Ovary (tissue), 10 donors: ENCODE measurements at regions of chr6 and their contacts with region 1.

Region 1: GRCh38 chr6:127539272-127539671 is 20.1 kb upstream of the MTCL3 start:
- DNase-seq: no peak
- H3K4me3 ChIP-seq: no peak overlapping the region
- H3K27ac ChIP-seq: no peak overlapping the region
- H3K4me1 ChIP-seq: no peaks in the 10 kb centered on the region
- H3K27me3 ChIP-seq: no peaks in the 10 kb centered on the region
- CTCF ChIP-seq: peak in 2 of 3 donors; percentile 13 to 34
- EP300 ChIP-seq: no peak
- POLR2A ChIP-seq: no peak

Region 2: DNA sequence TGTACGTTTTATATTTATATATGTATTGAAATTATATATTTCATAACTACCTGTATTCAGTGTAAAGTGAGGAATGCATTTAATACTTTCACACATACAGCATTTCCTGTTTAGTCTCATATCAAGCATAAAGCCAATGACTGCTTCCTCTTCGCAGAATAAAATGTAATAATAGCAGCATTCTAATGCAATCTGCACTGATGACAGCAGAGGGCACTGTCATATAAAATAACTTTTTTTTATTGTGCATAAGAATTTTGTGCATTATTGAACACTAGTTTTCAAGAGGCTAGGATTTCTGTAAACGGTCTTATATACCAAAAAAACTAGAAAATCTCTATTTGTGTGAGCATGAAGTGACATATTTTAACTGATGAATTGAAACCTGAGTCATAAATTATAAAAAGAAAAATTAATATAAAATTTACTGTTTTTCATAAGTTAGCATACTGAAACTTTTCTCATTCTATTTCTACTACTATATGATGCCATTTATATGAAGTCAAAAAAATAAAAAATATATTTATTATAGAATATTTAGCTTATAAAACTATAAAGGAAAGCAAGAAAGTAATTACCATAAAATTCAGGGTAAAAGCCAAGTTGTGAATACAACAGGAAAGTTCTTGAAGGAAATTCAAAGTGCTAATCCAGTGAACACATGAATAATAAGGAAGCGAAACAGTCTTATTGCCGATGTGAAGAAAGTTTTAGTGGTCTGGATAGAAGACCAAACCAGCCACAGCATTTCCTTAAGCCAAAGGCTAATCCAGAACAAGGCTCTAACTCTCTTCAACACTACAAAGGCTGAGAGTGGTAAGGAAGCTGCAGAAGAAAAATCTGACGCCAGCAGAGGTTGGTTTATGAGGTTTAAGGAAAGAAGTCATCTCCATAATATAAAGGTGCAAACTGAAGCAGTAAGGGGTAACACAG is 236.3 kb before region 1 on chr6:
- intact Hi-C with region 1: loop called in 3 of 4 experiments (anchors 5 to 10 kb)
- DNase-seq: peak in 2 of 5 donors; percentile 25 to 50
- H3K4me3 ChIP-seq: no peak overlapping the region
- H3K27ac ChIP-seq: no peak overlapping the region
- H3K4me1 ChIP-seq: no peaks in the 10 kb centered on the region
- H3K27me3 ChIP-seq: no peaks in the 10 kb centered on the region
- CTCF ChIP-seq: peak; percentile 24 to 45 (median 28)
- EP300 ChIP-seq: no peak
- POLR2A ChIP-seq: no peak

Region 3: DNA sequence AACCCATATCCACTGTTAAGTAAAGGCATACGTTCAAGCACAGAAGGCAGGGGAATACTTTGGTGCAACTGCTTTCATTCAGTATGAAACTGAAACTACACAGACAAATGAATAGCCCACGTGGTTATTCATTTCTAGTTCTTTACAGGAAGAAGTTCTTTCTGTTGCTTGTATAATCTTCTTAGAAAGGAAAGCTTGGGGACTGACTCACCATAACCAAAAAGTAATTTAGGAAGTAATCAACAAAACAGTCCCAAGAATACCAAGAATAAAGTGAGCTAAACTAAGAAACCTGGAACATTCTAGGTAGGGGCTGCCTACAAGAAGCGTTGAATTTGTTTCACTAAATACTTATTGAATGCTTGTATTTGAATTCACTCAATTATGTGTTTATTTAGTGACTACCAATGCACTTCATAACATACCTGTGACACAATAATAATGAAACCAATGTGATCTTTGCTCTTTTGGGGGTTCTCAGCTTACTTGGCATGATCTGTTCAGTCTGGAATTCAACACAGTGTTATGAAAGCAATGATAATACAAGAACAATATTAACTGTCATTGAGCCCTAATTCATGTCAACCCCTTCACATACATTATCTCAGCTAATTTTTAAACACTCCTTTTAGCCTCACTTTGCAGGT is 54.9 kb before region 1 on chr6:
- intact Hi-C with region 1: loop called in 1 of 4 experiments (anchors 10 kb)
- DNase-seq: no peak
- H3K4me3 ChIP-seq: no peak overlapping the region
- H3K27ac ChIP-seq: no peak overlapping the region
- H3K4me1 ChIP-seq: peaks cover 5% of the 10 kb centered on the region
- H3K27me3 ChIP-seq: no peaks in the 10 kb centered on the region
- CTCF ChIP-seq: no peak
- EP300 ChIP-seq: no peak
- POLR2A ChIP-seq: no peak

Region 4: DNA sequence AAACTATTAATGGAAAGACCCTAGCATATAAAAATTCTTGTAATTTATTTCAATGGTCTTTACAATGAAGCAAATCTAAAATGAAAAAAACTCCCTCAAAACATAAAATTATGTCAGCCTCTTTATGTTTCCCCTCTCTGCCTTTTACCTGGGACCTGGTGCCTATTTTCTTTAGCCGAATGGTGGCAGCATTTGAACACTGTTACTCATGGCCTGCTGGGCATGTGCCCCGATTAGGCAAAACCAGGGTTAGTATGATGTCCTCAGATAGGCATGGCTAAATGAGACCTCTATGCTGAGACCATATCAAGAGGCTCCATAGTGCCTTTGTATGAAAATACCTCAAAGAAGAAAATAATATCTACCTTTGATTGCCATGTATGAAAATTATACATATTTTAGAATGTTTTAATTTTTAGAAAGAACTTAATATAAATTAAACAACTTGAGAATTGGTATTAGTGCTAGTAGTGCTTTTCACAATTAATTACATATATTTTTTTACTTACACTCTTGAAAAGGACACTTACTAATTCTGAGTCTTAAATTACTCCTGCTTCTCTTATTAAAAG is 15.2 kb after region 1 on chr6:
- intact Hi-C with region 1: no loop called
- DNase-seq: no peak
- H3K4me3 ChIP-seq: no peak overlapping the region
- H3K27ac ChIP-seq: no peak overlapping the region
- H3K4me1 ChIP-seq: no peaks in the 10 kb centered on the region
- H3K27me3 ChIP-seq: no peaks in the 10 kb centered on the region
- CTCF ChIP-seq: no peak
- EP300 ChIP-seq: no peak
- POLR2A ChIP-seq: no peak